Body of pancreas (tissue), 4 donors: ENCODE measurements at regions of chr20 and their contacts with region 1.

Region 1: GRCh38 chr20:62668441-62669027 is 26.2 kb downstream of the SLCO4A1 start:
- DNase-seq: peak; percentile 78 to 84 (median 80)
- ATAC-seq: peak; percentile 67
- H3K4me3 ChIP-seq: no peak overlapping the region
- H3K27ac ChIP-seq: no peak overlapping the region
- H3K4me1 ChIP-seq: peaks cover 18% of the 10 kb centered on the region
- H3K27me3 ChIP-seq: peaks cover 0 to under 1% of the 10 kb centered on the region in 2 donors
- CTCF ChIP-seq: peak; percentile 69 to 92 (median 84)
- POLR2A ChIP-seq: no peak

Region 2: GRCh38 chr20:62740286-62741141 is 72.0 kb after region 1 on chr20:
- intact Hi-C with region 1: no loop called
- DNase-seq: peak in 2 of 4 donors; percentile 7 to 27
- ATAC-seq: no peak
- H3K4me3 ChIP-seq: no peak overlapping the region
- H3K27ac ChIP-seq: no peak overlapping the region
- H3K4me1 ChIP-seq: no peaks in the 10 kb centered on the region
- H3K27me3 ChIP-seq: no peaks in the 10 kb centered on the region
- CTCF ChIP-seq: no peak
- POLR2A ChIP-seq: no peak

Region 3: DNA sequence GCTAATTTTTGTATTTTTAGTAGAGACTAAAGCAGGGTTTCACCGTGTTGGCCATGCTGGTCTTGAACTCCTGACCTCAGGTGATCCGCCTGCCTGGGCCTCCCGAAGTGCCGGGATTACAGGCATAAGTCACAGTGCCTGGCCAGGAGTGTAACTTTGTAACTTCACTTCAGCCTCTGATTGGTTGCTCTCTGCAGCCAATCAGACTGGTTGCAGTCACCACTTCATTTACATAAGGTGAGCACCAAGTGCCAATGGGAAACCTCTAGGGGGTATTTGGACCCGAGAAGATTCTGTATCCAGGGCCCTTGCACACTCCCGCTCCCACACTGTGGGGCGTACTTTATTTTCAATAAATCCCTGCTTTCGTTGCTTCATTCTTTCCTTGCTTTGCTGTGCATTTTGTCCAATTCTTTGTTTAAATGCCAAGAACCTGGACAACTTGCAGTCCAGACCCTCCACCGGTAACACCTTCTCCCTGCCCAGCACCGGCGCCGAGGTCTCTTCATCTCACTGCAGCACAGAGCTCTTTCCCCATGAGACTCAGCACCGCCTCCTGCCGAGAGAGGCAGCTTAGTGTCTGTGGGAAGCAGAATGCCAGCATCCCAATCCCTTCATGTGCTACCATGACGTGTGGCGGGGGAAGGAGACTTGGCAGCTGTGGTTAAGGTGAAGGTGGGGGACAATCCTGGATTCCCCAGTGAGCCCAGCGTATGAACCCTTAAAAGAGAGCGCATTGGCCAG is 113.8 kb after region 1 on chr20:
- intact Hi-C with region 1: loop called (anchors 5 kb)
- DNase-seq: no peak
- ATAC-seq: no peak
- H3K4me3 ChIP-seq: no peak overlapping the region
- H3K27ac ChIP-seq: no peak overlapping the region
- H3K4me1 ChIP-seq: no peaks in the 10 kb centered on the region
- H3K27me3 ChIP-seq: no peaks in the 10 kb centered on the region
- CTCF ChIP-seq: no peak
- POLR2A ChIP-seq: no peak

Region 4: DNA sequence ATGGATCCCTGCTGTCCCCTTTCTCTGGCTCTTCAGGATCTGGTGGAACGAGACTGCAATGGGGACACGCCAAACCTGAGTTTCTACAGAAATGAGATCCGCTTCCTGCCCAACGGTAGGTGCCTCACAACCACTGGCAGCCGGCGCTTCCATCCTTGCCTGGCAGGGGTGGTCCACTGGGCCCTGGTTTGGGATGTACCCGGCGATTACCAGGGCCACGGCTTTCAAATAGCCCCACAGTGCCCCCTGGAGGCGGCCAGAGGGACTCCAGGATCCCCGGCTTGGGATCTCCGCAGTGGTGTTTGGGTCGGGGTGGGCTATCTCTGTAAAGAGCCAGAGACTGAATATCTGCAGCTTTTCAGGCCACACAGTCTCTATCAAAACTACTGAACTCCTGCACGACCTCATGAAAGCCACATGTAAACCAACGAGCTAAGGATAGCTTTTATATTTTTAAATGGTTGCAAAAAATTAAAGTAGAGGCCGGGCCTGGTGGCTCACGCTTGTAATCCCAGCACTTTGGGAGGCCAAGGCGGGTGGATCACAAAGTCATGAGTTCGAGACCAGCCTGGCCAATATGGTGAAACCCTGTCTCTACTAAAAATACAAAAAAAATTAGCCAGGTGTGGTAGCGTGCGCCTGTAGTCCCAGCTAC is 139.8 kb after region 1 on chr20:
- intact Hi-C with region 1: loop called (anchors 2 kb)
- DNase-seq: peak; percentile 65 to 77 (median 70)
- ATAC-seq: peak; percentile 47
- H3K4me3 ChIP-seq: no peak overlapping the region
- H3K27ac ChIP-seq: no peak overlapping the region
- H3K4me1 ChIP-seq: peaks cover 24% of the 10 kb centered on the region
- H3K27me3 ChIP-seq: no peaks in the 10 kb centered on the region
- CTCF ChIP-seq: peak; percentile 74 to 94 (median 81)
- POLR2A ChIP-seq: no peak